ENCODE measurements at regions of chr5 and their contacts with region 1.

Region 1: GRCh38 chr5:132500931-132501630 is 10.5 kb upstream of the IRF1 start:
- DNase-seq: peak; percentile 75
- ATAC-seq: peak; percentile 55
- H3K4me3 Mint-ChIP-seq: no peak overlapping the region
- H3K27ac Mint-ChIP-seq: peak overlapping the region; percentile 88
- H3K4me1 Mint-ChIP-seq: peaks cover 30% of the 10 kb centered on the region
- H3K27me3 Mint-ChIP-seq: no peaks in the 10 kb centered on the region
- CTCF ChIP-seq: peak; percentile 84

Region 2: DNA sequence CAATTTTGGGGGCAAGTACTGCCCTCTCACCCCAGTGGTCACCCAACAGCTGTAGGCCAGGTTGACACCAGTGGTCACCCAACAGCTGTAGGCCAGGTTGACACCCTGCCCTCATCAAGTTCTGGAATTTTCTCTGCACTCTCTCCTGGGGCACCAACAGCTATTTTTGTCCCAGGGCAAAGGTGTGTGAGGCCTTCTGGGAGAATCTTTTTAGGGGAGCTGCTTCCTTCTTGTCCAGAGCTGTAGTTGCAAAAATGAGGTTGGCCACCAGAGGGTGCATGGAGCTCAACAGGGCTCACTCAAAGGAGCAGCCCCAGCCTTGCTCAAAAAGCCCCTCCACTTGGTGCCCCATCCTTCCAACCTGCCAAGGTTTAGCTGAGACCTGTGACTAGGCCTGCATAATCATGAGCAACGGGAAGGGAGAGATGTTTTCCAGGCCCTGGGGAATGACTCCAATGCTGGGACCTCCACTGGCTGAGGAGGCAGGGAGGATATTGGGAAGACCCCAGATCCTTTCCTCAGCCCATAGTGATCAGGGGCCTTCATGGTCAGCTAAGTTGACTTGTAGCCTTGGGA is 262.8 kb before region 1 on chr5:
- CTCF ChIA-PET with region 1: interaction called, 12 read pairs
- POLR2A ChIA-PET with region 1: no interaction called
- intact Hi-C with region 1: loop called (anchors 1 kb)
- DNase-seq: peak; percentile 59
- ATAC-seq: peak; percentile 90
- H3K4me3 Mint-ChIP-seq: no peak overlapping the region
- H3K27ac Mint-ChIP-seq: no peak overlapping the region
- H3K4me1 Mint-ChIP-seq: no peaks in the 10 kb centered on the region
- H3K27me3 Mint-ChIP-seq: peaks cover 4% of the 10 kb centered on the region
- CTCF ChIP-seq: no peak

Region 3: GRCh38 chr5:132386644-132387286 is 114.3 kb before region 1 on chr5:
- CTCF ChIA-PET with region 1: interaction called, 253 read pairs
- POLR2A ChIA-PET with region 1: interaction called, 34 read pairs
- intact Hi-C with region 1: loop called (anchors 1 kb)
- DNase-seq: peak; percentile 62
- ATAC-seq: peak; percentile 92
- H3K4me3 Mint-ChIP-seq: no peak overlapping the region
- H3K27ac Mint-ChIP-seq: peak overlapping the region; percentile 39
- H3K4me1 Mint-ChIP-seq: peaks cover 21% of the 10 kb centered on the region
- H3K27me3 Mint-ChIP-seq: no peaks in the 10 kb centered on the region
- CTCF ChIP-seq: no peak

Region 4: DNA sequence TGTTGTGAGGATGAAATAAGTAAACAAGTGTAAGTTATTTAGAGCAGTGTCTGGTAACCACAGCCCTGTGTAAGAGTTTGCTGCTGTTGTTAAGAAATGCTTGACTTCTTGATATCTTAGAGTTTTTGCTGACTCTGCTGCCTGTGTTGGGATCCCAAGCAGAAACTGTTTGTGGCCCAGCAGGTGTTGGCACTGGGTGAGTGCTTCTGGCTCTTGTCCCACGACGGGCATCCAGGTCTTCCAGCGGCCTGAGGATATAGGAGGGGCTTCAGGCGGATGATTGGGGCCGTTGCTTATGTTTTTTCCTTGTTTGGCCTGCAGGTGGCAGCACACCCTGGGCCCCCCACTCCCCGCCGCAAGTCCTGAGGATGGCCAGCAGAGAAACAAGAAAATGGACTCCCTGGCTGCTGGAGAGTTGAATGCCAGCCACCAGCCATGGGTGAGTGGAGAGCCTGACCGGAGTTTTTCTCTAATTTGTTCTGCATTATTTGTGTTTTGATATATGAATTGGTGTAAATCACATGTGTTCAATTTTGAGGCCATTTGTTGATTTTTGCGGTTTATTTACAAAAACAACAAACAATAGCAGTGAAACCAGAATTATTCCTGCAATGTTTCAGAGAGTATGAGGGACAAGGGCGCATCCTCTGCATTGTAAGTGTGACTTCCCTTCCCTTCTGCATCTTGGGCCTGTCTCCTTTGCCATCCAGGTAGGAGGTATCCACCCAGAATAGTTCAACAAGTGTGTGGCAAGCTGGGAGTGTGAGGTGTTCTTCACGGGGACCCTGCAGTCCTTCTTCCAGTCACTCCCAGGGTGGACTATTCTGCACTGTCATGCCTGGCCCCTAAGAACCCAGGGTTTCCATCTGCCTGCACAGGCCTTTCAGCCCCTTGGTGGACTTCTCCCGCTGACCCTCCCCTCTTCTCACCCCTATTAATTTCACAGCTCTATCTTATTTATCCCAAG is 81.3 kb before region 1 on chr5:
- CTCF ChIA-PET with region 1: interaction called, 43 read pairs
- POLR2A ChIA-PET with region 1: interaction called, 461 read pairs
- intact Hi-C with region 1: loop called (anchors 1 kb)
- DNase-seq: peak; percentile 62
- ATAC-seq: peak; percentile 35
- H3K4me3 Mint-ChIP-seq: peak overlapping the region; percentile 82
- H3K27ac Mint-ChIP-seq: peak overlapping the region; percentile 90
- H3K4me1 Mint-ChIP-seq: peaks cover 97% of the 10 kb centered on the region
- H3K27me3 Mint-ChIP-seq: no peaks in the 10 kb centered on the region
- CTCF ChIP-seq: peak; percentile 51

Region 5: GRCh38 chr5:132490486-132491367 is 10.4 kb before region 1 on chr5 and contains the start of gene IRF1:
- CTCF ChIA-PET with region 1: interaction called, 52 read pairs
- POLR2A ChIA-PET with region 1: interaction called, 99 read pairs
- intact Hi-C with region 1: no loop called
- DNase-seq: peak; percentile 98
- ATAC-seq: peak; percentile 71
- H3K4me3 Mint-ChIP-seq: peak within 1 kb of the TSS; percentile 95
- H3K27ac Mint-ChIP-seq: peak within 1 kb of the TSS; percentile 93
- H3K4me1 Mint-ChIP-seq: peaks cover 82% of the 10 kb centered on the region
- H3K27me3 Mint-ChIP-seq: no peaks in the 10 kb centered on the region
- CTCF ChIP-seq: no peak
- total RNA-seq, gene IRF1: 126 and 134 TPM in 2 replicates

Region 6: GRCh38 chr5:132820162-132820754 is 319.2 kb after region 1 on chr5:
- CTCF ChIA-PET with region 1: interaction called, 26 read pairs
- POLR2A ChIA-PET with region 1: no interaction called
- intact Hi-C with region 1: loop called (anchors 1 kb)
- DNase-seq: peak; percentile 70
- ATAC-seq: peak; percentile 89
- H3K4me3 Mint-ChIP-seq: peak overlapping the region; percentile 38
- H3K27ac Mint-ChIP-seq: no peak overlapping the region
- H3K4me1 Mint-ChIP-seq: peaks cover 12% of the 10 kb centered on the region
- H3K27me3 Mint-ChIP-seq: peaks cover 27% of the 10 kb centered on the region
- CTCF ChIP-seq: no peak